ENCODE measurements at regions of chr14 and their contacts with region 1.

Region 1: GRCh38 chr14:60317609-60318008 is 68.6 kb downstream of the PPM1A start:
- DNase-seq: no peak
- H3K4me3 ChIP-seq: no peak overlapping the region
- H3K27ac ChIP-seq: no peak overlapping the region
- H3K4me1 ChIP-seq: no peaks in the 10 kb centered on the region
- H3K27me3 ChIP-seq: no peaks in the 10 kb centered on the region
- CTCF ChIP-seq: no peak
- POLR2A ChIP-seq: no peak

Region 2: GRCh38 chr14:60014402-60014801 is 303.2 kb before region 1 on chr14:
- intact Hi-C with region 1: no loop called
- DNase-seq: no peak
- H3K4me3 ChIP-seq: no peak overlapping the region
- H3K27ac ChIP-seq: no peak overlapping the region
- H3K4me1 ChIP-seq: no peaks in the 10 kb centered on the region
- H3K27me3 ChIP-seq: no peaks in the 10 kb centered on the region
- CTCF ChIP-seq: no peak
- POLR2A ChIP-seq: no peak

Region 3: GRCh38 chr14:60514741-60515491 is 197.3 kb after region 1 on chr14:
- intact Hi-C with region 1: loop called (anchors 5 kb)
- DNase-seq: no peak
- H3K4me3 ChIP-seq: peak overlapping the region; percentile 26 to 68 (median 43)
- H3K27ac ChIP-seq: no peak overlapping the region
- H3K4me1 ChIP-seq: peaks cover 4 to 9% of the 10 kb centered on the region in 2 donors
- H3K27me3 ChIP-seq: peaks cover 4 to 73% of the 10 kb centered on the region in 2 donors
- CTCF ChIP-seq: no peak
- POLR2A ChIP-seq: no peak

Region 4: GRCh38 chr14:61625165-61625564 is 1307.6 kb after region 1 on chr14:
- intact Hi-C with region 1: no loop called
- DNase-seq: no peak
- H3K4me3 ChIP-seq: no peak overlapping the region
- H3K27ac ChIP-seq: no peak overlapping the region
- H3K4me1 ChIP-seq: no peaks in the 10 kb centered on the region
- H3K27me3 ChIP-seq: no peaks in the 10 kb centered on the region
- CTCF ChIP-seq: no peak
- POLR2A ChIP-seq: no peak

Measured in breast epithelium (tissue), 4 donors.